Calu3 (cell line): ENCODE measurements at regions of chr10 and their contacts with region 1.

Region 1: DNA sequence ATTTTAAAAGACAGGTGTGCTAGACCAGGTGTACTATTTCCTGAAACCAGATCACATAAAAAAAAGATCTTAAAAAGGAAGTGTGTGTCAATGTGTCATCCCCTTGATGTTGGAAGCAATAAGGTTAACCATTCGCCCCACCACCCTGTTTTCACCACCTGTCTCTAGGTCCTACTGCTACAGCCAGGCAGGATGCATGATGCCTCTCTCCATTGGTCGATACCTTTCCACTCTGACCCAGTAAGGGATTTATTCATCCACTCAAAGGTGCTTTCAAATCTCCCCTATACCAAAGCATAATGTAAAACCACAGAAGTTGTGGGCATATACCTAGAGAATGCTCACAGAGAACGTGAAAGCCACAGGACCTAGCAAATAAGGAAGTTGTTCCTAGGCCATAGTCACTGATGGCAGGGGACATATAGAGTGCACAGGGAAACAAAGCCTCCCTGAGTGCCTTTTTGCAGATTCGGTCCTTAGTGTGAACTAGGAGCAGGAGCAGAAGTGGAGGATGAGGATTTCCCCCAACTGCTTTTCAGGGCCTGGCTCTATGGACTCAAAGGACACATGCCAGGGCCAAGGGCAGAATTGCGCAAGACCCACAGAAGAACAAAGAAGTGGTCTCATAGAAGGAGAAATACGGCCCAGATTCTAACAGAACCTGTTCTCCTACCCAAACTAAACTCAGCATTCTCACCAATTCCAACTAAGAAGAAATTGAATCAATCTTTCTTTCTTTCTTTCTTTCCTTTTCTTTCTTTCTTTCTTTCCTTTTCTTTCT is 631.5 kb upstream of the NRP1 start:
- DNase-seq: no peak
- H3K4me3 Mint-ChIP-seq: no peak overlapping the region
- H3K27ac Mint-ChIP-seq: no peak overlapping the region
- H3K4me1 Mint-ChIP-seq: no peaks in the 10 kb centered on the region
- H3K27me3 Mint-ChIP-seq: no peaks in the 10 kb centered on the region
- CTCF ChIP-seq: no peak

Region 2: GRCh38 chr10:33314811-33315561 is 651.0 kb before region 1 on chr10:
- CTCF ChIA-PET with region 1: interaction called, 12 read pairs
- intact Hi-C with region 1: no loop called
- DNase-seq: no peak
- H3K4me3 Mint-ChIP-seq: no peak overlapping the region
- H3K27ac Mint-ChIP-seq: no peak overlapping the region
- H3K4me1 Mint-ChIP-seq: peaks cover 36% of the 10 kb centered on the region
- H3K27me3 Mint-ChIP-seq: no peaks in the 10 kb centered on the region
- CTCF ChIP-seq: no peak

Region 3: GRCh38 chr10:33421789-33422462 is 544.1 kb before region 1 on chr10:
- CTCF ChIA-PET with region 1: no interaction called
- intact Hi-C with region 1: no loop called
- DNase-seq: no peak
- H3K4me3 Mint-ChIP-seq: no peak overlapping the region
- H3K27ac Mint-ChIP-seq: no peak overlapping the region
- H3K4me1 Mint-ChIP-seq: peaks cover 9% of the 10 kb centered on the region
- H3K27me3 Mint-ChIP-seq: no peaks in the 10 kb centered on the region
- CTCF ChIP-seq: no peak

Region 4: GRCh38 chr10:34037499-34037898 is 71.5 kb after region 1 on chr10:
- CTCF ChIA-PET with region 1: no interaction called
- intact Hi-C with region 1: no loop called
- DNase-seq: no peak
- H3K4me3 Mint-ChIP-seq: no peak overlapping the region
- H3K27ac Mint-ChIP-seq: no peak overlapping the region
- H3K4me1 Mint-ChIP-seq: no peaks in the 10 kb centered on the region
- H3K27me3 Mint-ChIP-seq: no peaks in the 10 kb centered on the region
- CTCF ChIP-seq: no peak